KBM-7 (cell line): ENCODE measurements at regions of chr12 and their contacts with region 1.

Region 1: DNA sequence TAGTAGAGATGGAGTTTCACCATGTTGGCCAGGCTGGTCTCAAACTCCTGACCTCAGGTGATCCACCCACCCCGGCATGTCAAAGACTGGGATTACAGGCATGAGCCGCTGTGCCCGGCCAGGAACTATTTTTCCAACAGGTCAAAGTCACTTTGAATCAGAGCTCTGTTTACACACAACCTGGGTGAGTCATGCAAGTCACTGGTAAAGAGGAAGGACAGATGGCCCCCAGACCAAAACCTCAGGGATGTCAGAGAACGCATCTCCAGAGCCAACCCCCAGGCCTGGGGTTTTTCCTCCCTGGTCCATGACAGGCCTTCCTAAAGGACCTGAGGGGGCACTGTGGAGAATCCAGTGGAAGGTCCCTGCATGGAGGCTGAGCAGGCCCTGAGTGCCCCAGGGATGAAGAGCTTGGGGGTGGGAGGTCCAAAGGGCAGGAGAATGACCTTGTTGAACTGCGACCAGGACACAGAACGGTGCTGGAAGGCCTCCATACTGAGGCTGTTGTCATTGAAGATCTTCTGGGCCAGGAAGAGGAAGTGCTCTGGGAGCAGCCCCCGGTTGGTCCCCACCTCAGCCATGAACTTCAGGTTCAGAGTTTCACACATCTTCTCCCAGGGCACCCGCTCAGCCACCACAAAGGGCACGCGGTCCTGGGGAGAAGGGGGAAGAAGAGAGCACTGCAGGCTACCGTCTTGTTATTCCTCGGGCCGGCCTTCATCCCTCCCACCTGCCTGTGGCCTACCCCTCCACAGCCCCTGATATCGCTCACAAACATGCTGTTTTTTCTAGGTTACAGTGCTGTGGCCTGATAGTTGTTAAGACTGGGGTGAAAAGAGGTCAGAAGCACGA is 9.1 kb downstream of the STAT6 start:
- DNase-seq: peak; percentile 74

Region 2: DNA sequence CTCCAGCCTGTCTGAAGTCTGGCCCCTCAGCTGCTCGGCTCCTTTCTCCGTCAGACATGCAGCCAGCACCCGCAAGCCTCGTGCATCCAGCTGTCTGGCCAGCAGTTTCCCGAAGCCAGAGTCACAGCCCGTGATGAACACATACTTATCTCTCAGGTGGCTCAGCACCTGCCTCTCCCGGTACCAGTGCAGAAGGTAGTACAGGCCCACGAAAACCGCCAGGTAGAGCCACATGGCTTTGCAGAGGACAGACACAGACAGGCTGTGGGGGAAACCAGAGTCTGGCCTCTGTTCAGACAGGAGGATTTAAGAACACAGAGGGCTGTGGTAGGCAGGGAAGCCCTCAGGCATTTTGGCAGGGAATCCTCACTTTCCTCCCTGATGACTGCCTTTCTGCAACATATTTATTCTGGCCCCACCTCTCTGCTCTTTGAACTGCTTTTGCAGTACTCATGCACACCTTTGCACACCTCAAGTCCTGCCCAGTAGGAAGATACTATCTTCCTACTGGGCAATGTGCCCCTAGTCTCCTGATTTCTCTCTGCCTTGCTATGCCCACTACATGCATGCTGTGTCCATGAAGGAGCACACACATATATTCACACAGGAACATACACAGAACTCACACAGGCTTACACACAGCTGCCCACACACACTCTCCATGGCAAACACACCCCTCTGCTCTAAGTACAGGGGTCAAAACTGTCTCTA is 144.7 kb before region 1 on chr12 and contains the start of gene RDH16:
- in situ Hi-C with region 1: no loop called
- DNase-seq: no peak

Region 3: GRCh38 chr12:57012600-57013465 is 89.2 kb before region 1 on chr12:
- in situ Hi-C with region 1: loop called (anchors 10 kb)
- DNase-seq: no peak